ENCODE measurements at regions of chr2 and their contacts with region 1.

Region 1: DNA sequence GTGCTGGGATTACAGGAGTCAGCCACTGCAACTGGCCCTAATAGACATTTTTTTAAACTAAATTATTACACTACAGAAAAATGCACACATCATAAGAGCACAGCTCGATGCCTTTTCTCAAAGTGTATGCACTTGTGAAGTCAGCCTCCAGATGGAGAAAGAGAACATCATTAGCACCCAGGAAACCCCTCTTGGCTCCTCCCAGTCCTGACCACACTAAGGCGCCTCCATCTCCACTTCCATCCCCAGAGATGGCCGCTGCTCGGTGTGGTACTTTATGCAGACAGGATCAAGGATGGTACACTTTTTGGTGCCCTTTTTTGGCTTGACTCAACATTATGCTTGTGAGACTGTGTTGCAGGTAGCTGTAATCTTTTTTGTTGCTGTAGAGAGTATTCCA is 34.8 kb downstream of the RRM2 start:
- DNase-seq: peak; percentile 50
- H3K4me3 ChIP-seq: no peak overlapping the region
- H3K27ac ChIP-seq: no peak overlapping the region
- H3K4me1 ChIP-seq: peaks cover 0 to 7% of the 10 kb centered on the region in 2 experiments; a peak in 1 of 4 replicates
- H3K27me3 ChIP-seq: no peaks in the 10 kb centered on the region
- CTCF ChIP-seq: peak; percentile 10; the same call in 1 of the 2 replicates
- EP300 ChIP-seq: no peak
- RAD21 ChIP-seq: no peak

Region 2: DNA sequence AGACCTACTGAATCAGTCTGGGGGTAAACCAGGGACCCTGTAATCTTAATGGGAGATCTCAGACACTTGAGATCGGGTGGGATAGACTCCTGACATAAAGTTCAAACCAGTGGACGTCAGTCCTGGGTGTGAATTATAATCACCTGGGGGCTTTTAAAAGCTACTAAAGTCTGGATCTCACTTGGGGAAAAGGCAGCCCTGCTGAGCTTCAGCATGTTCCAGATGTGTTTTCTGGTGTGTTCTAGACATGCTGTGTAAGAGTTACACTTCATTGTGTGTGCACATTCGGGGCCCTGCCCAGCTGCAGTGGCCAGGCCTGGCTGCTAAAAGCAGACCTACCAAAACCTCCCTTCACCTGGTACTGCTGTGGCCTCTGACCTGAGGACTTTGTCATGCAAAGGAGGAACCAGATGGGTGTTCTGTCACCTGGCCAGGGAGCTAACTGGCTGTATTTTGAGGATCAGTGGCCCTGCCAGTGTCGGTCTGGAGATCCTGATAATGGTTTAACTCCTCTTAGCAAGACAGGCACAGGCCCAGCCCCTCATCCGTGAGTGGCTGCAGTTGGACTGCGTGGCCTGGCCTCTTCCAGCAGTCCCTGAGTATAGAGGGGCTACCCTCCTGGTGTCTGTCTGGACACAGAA is 24.2 kb before region 1 on chr2:
- CTCF ChIA-PET with region 1: no interaction called
- POLR2A ChIA-PET with region 1: no interaction called
- DNase-seq: no peak
- H3K4me3 ChIP-seq: no peak overlapping the region
- H3K27ac ChIP-seq: peak overlapping the region in 1 of 2 experiments; percentile 18; a peak in 1 of 4 replicates
- H3K4me1 ChIP-seq: peaks cover 0 to 16% of the 10 kb centered on the region in 2 experiments; a peak in 1 of 4 replicates
- H3K27me3 ChIP-seq: no peaks in the 10 kb centered on the region
- CTCF ChIP-seq: no peak
- EP300 ChIP-seq: no peak
- RAD21 ChIP-seq: no peak

Region 3: DNA sequence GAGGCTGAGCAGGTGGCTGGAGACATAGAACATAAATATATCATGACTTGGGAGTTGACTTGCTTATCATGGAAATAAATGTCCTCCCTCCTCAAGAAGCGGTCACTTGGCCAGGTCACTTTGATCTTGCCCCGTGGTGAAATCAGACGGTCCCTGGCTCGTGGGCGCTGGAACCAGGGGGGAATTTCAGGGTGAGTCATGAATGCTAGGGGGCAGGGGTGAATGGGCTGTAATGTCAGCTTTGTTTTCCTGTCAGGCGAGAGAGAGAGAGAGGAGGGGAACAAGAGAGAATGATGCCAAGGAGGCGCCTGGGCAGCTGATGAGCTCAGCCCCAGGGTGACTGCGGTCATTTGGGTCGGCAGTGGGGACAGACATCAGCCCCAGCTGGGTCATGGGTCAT is 13.0 kb after region 1 on chr2:
- CTCF ChIA-PET with region 1: interaction called, 10 read pairs
- POLR2A ChIA-PET with region 1: interaction called, 4 read pairs
- DNase-seq: peak; percentile 63
- H3K4me3 ChIP-seq: no peak overlapping the region
- H3K27ac ChIP-seq: peak overlapping the region; percentile 37 to 90
- H3K4me1 ChIP-seq: peaks cover 19 to 63% of the 10 kb centered on the region in 2 experiments; a peak in 3 of 4 replicates
- H3K27me3 ChIP-seq: no peaks in the 10 kb centered on the region
- CTCF ChIP-seq: no peak
- EP300 ChIP-seq: no peak; a peak in 2 of 4 replicates
- RAD21 ChIP-seq: no peak